ENCODE measurements at regions of chr10 and their contacts with region 1.

Region 1: DNA sequence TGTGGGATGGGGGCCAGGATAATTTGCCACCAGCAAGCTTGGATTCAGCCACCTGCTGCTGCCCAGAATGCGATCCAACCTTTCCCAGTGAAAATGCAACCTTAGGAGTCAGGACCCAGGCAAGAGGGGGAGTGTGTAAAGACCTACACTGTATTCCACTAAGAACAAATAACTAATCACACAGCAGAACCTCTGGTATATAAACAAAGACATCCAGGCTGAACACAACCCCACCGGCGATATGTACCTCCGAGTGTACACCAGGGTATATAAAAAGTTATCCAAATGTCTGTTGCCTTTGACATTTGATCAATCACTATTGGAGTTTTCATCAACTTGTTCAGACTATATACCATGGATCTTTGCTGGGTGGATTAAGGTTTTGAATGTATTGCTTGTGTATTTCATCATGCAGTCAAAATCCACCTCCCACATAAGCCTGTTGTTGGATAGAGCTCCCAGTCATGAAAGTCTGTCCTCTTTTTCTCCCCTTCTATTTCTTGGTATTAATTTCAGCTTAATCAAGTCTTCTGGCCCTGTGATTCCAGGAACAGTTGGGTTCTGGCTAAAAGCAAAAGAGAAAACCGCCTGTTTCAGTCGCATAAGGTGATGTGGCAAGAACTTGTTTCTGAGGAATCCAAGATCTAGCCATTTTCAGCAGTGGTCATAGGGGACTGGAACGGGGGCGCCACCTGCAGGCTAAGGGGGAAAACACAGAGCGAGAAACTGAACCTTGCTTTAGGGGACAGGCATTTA is 290.7 kb downstream of the CCDC3 start:
- DNase-seq: peak; percentile 90
- H3K4me3 Mint-ChIP-seq: no peak overlapping the region
- H3K27ac Mint-ChIP-seq: peak overlapping the region; percentile 81
- H3K4me1 Mint-ChIP-seq: peaks cover 20% of the 10 kb centered on the region
- H3K27me3 Mint-ChIP-seq: no peaks in the 10 kb centered on the region

Region 2: GRCh38 chr10:12129222-12130111 is 581.3 kb before region 1 on chr10 and contains the start of gene SEC61A2:
- CTCF ChIA-PET with region 1: no interaction called
- intact Hi-C with region 1: loop called (anchors 1 kb)
- DNase-seq: peak; percentile 97
- H3K4me3 Mint-ChIP-seq: peak within 1 kb of the TSS; percentile 83
- H3K27ac Mint-ChIP-seq: peak within 1 kb of the TSS; percentile 76
- H3K4me1 Mint-ChIP-seq: peaks cover 33% of the 10 kb centered on the region
- H3K27me3 Mint-ChIP-seq: no peaks in the 10 kb centered on the region
- total RNA-seq, gene SEC61A2: 18.2 to 20.0 TPM

Region 3: DNA sequence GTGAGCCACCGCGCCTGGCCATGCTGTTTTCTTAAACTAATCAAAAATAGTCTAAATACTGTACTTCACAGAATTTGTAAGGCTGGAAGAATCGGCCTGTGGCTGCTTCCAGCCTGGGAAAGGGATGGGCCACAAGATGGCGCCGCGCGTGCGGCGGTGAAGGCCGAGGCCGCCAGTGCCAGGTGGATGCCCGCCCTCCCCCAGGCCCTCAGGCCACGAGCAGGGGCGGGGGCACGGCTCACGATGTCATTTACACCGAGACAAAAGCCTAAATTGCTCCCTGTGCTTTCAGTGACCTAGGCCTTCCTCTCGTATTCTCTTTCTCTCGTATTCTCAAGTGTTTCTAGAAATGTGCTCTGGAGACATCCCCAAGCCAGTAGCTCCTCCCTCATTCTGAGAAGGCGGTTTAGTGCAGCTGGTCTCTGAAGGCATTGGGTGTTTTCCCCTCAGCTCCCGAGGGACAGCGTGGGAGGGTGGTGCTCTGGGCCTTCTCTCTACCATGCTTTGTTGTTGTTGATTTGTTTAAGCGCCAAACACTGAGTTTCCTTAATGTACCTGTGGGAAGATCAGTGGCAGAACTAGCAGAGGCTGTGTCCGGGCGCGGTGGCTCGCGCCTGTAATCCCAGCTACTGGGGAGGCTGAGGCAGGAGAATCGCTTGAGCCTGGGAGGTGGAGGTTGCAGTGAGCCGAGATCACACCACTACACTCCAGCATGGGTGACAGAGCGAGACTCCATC is 446.4 kb before region 1 on chr10:
- CTCF ChIA-PET with region 1: interaction called, 18 read pairs
- intact Hi-C with region 1: loop called (anchors 1 kb)
- DNase-seq: peak; percentile 84
- H3K4me3 Mint-ChIP-seq: peak overlapping the region; percentile 58
- H3K27ac Mint-ChIP-seq: peak overlapping the region; percentile 79
- H3K4me1 Mint-ChIP-seq: peaks cover 17% of the 10 kb centered on the region
- H3K27me3 Mint-ChIP-seq: no peaks in the 10 kb centered on the region

Region 4: GRCh38 chr10:12484941-12485805 is 225.6 kb before region 1 on chr10:
- CTCF ChIA-PET with region 1: interaction called, 3 read pairs
- intact Hi-C with region 1: loop called (anchors 2 kb)
- DNase-seq: peak; percentile 65
- H3K4me3 Mint-ChIP-seq: peak overlapping the region; percentile 25
- H3K27ac Mint-ChIP-seq: peak overlapping the region; percentile 8
- H3K4me1 Mint-ChIP-seq: peaks cover 20% of the 10 kb centered on the region
- H3K27me3 Mint-ChIP-seq: no peaks in the 10 kb centered on the region

Region 5: DNA sequence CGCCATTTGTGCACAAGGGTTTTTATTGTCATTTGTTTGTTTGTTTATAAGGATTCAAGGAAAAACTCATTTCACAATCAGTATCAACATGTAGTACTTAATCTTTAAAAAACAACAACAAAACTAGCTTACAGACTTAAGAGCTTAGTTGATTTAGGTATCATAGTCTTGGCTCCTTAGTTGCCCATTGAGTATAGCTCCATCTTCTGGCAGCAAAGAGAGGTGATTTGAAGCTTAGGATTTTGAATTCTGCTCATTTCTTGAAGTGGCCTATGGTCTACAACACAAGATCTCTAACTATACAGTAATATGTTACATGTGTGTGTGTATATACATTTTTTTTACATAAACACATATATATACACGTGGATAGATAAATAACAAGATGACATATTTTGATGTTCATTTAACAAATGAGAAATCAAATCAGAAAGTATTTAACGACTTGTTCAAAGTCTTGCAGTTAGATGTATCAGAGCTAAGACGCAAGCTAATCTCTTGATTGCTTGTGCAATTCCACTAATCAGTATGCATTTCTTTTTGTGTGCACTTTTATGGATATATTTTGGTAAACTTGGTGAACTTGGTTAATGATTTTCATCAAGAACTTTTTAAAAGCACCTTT is 54.1 kb before region 1 on chr10:
- CTCF ChIA-PET with region 1: interaction called, 21 read pairs
- intact Hi-C with region 1: loop called (anchors 1 kb)
- DNase-seq: no peak
- H3K4me3 Mint-ChIP-seq: no peak overlapping the region
- H3K27ac Mint-ChIP-seq: no peak overlapping the region
- H3K4me1 Mint-ChIP-seq: peaks cover 2% of the 10 kb centered on the region
- H3K27me3 Mint-ChIP-seq: no peaks in the 10 kb centered on the region

Region 6: GRCh38 chr10:12825260-12825849 is 114.6 kb after region 1 on chr10:
- CTCF ChIA-PET with region 1: no interaction called
- intact Hi-C with region 1: no loop called
- DNase-seq: no peak
- H3K4me3 Mint-ChIP-seq: no peak overlapping the region
- H3K27ac Mint-ChIP-seq: no peak overlapping the region
- H3K4me1 Mint-ChIP-seq: no peaks in the 10 kb centered on the region
- H3K27me3 Mint-ChIP-seq: no peaks in the 10 kb centered on the region

Region 7: GRCh38 chr10:12902135-12902572 is 191.4 kb after region 1 on chr10:
- CTCF ChIA-PET with region 1: interaction called, 9 read pairs
- intact Hi-C with region 1: loop called (anchors 1 kb)
- DNase-seq: peak; percentile 71
- H3K4me3 Mint-ChIP-seq: no peak overlapping the region
- H3K27ac Mint-ChIP-seq: no peak overlapping the region
- H3K4me1 Mint-ChIP-seq: no peaks in the 10 kb centered on the region
- H3K27me3 Mint-ChIP-seq: peaks cover 5% of the 10 kb centered on the region

Region 8: GRCh38 chr10:13099666-13100348 is 389.0 kb after region 1 on chr10 and contains the start of gene OPTN:
- CTCF ChIA-PET with region 1: interaction called, 3 read pairs
- intact Hi-C with region 1: loop called (anchors 1 kb)
- DNase-seq: peak; percentile 89
- H3K4me3 Mint-ChIP-seq: peak within 1 kb of the TSS; percentile 88
- H3K27ac Mint-ChIP-seq: peak within 1 kb of the TSS; percentile 81
- H3K4me1 Mint-ChIP-seq: peaks cover 26% of the 10 kb centered on the region
- H3K27me3 Mint-ChIP-seq: no peaks in the 10 kb centered on the region
- total RNA-seq, gene OPTN: 39.7 to 43.8 TPM

Measured in activated naive CD4-positive, alpha-beta T cell treated with anti-CD3 and anti-CD28 coated beads for 36 hours (primary cell).